ENCODE measurements at regions of chr10 and their contacts with region 1.

Region 1: GRCh38 chr10:73772280-73773151 is 9.3 kb upstream of the CHCHD1 start:
- DNase-seq: peak; percentile 90 to 93
- ATAC-seq: peak; percentile 93
- H3K4me3 ChIP-seq: peak overlapping the region; percentile 61 to 72
- H3K27ac ChIP-seq: peak overlapping the region; percentile 47 to 88
- H3K4me1 ChIP-seq: peaks cover 0 to 2% of the 10 kb centered on the region in 2 donors
- H3K27me3 ChIP-seq: no peaks in the 10 kb centered on the region

Region 2: GRCh38 chr10:73601486-73601921 is 171.0 kb before region 1 on chr10:
- intact Hi-C with region 1: no loop called
- DNase-seq: no peak
- ATAC-seq: no peak
- H3K4me3 ChIP-seq: no peak overlapping the region
- H3K27ac ChIP-seq: no peak overlapping the region
- H3K4me1 ChIP-seq: peaks cover 0 to 3% of the 10 kb centered on the region in 2 donors
- H3K27me3 ChIP-seq: no peaks in the 10 kb centered on the region

Region 3: DNA sequence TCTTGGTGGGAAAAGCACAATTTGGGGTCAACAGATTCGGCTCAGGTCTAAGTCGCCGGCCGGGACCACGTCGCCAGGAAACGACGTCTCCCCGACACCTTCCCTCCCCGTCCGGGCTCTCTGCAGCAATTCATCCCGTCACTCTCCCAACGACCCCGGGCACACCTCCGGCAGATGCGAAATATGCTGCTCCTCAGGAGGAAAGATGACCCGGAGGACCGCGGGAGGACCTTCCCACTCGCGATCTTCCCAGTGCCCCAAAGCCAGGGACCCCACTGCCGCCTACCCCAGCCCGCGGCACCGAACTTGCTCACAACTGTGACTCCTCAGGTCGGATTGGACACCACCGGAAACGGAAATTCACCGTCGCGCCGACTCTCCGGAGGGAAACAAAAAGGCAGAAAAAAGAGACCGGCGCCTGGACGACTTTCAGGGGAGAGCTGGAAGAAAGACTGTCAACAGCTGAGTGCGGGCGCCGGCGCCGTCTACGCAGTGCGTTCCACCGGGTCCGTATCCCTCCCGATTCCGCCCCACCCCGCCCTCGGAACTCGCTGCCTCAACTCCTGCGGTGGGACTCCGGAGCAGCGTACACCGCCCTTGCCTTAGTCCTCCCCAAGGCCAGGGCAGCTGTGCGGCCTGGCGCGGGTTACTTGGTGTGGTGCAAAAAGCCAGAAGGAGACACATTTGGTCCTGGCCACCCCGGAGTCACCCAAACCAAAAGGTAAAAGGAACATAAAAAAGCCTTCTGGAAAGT is 42.2 kb before region 1 on chr10:
- intact Hi-C with region 1: loop called in 1 of 2 experiments (anchors 5 kb)
- DNase-seq: peak; percentile 90 to 95
- ATAC-seq: peak; percentile 95
- H3K4me3 ChIP-seq: peak overlapping the region; percentile 73 to 85
- H3K27ac ChIP-seq: peak overlapping the region; percentile 20 to 87
- H3K4me1 ChIP-seq: no peaks in the 10 kb centered on the region
- H3K27me3 ChIP-seq: no peaks in the 10 kb centered on the region

Region 4: GRCh38 chr10:73874267-73875138 is 102.0 kb after region 1 on chr10 and contains the start of gene CAMK2G:
- intact Hi-C with region 1: loop called in 1 of 2 experiments (anchors 5 kb)
- DNase-seq: peak; percentile 93 to 95
- ATAC-seq: peak; percentile 93
- H3K4me3 ChIP-seq: peak within 1 kb of the TSS; percentile 85 to 98
- H3K27ac ChIP-seq: peak within 1 kb of the TSS in 1 of 2 donors; percentile 46
- H3K4me1 ChIP-seq: peaks cover 2% of the 10 kb centered on the region in 2 donors
- H3K27me3 ChIP-seq: no peaks in the 10 kb centered on the region
- total RNA-seq, gene CAMK2G: 70.6 to 76.7 TPM

Measured in aorta (tissue), 5 donors.